CD4-positive, alpha-beta T cell (primary cell): ENCODE measurements at regions of chr1 and their contacts with region 1.

Region 1: GRCh38 chr1:174825806-174826205 is 173.9 kb upstream of the CACYBP start:
- DNase-seq: no peak
- ATAC-seq: no peak
- H3K4me3 ChIP-seq: no peak overlapping the region
- H3K4me3 Mint-ChIP-seq: no peak overlapping the region
- H3K27ac ChIP-seq: no peak overlapping the region
- H3K27ac Mint-ChIP-seq: no peak overlapping the region
- H3K4me1 ChIP-seq: no peaks in the 10 kb centered on the region
- H3K4me1 Mint-ChIP-seq: peaks cover 11% of the 10 kb centered on the region
- H3K27me3 ChIP-seq: no peaks in the 10 kb centered on the region
- H3K27me3 Mint-ChIP-seq: no peaks in the 10 kb centered on the region
- CTCF ChIP-seq: no peak

Region 2: GRCh38 chr1:174839211-174839610 is 13.4 kb after region 1 on chr1:
- CTCF ChIA-PET with region 1: interaction called, 4 read pairs
- POLR2A ChIA-PET with region 1: no interaction called
- intact Hi-C with region 1: loop called in 1 of 2 experiments (anchors 1 kb)
- DNase-seq: no peak
- ATAC-seq: no peak
- H3K4me3 ChIP-seq: no peak overlapping the region
- H3K4me3 Mint-ChIP-seq: no peak overlapping the region
- H3K27ac ChIP-seq: no peak overlapping the region
- H3K27ac Mint-ChIP-seq: no peak overlapping the region
- H3K4me1 ChIP-seq: no peaks in the 10 kb centered on the region
- H3K4me1 Mint-ChIP-seq: peaks cover 22% of the 10 kb centered on the region
- H3K27me3 ChIP-seq: no peaks in the 10 kb centered on the region
- H3K27me3 Mint-ChIP-seq: no peaks in the 10 kb centered on the region
- CTCF ChIP-seq: no peak